ENCODE measurements at regions of chrX and their contacts with region 1.

Region 1: GRCh38 chrX:69222103-69223090 is 57.1 kb upstream of the PJA1 start:
- H3K4me3 ChIP-seq: no peak overlapping the region
- H3K27ac ChIP-seq: no peak overlapping the region
- H3K4me1 ChIP-seq: no peaks in the 10 kb centered on the region
- CTCF ChIP-seq: peak; percentile 73

Region 2: GRCh38 chrX:68822641-68823410 is 399.6 kb before region 1 on chrX:
- CTCF ChIA-PET with region 1: interaction called, 137 read pairs
- POLR2A ChIA-PET with region 1: interaction called, 34 read pairs
- H3K4me3 ChIP-seq: no peak overlapping the region
- H3K27ac ChIP-seq: no peak overlapping the region
- H3K4me1 ChIP-seq: no peaks in the 10 kb centered on the region
- CTCF ChIP-seq: peak; percentile 90

Region 3: DNA sequence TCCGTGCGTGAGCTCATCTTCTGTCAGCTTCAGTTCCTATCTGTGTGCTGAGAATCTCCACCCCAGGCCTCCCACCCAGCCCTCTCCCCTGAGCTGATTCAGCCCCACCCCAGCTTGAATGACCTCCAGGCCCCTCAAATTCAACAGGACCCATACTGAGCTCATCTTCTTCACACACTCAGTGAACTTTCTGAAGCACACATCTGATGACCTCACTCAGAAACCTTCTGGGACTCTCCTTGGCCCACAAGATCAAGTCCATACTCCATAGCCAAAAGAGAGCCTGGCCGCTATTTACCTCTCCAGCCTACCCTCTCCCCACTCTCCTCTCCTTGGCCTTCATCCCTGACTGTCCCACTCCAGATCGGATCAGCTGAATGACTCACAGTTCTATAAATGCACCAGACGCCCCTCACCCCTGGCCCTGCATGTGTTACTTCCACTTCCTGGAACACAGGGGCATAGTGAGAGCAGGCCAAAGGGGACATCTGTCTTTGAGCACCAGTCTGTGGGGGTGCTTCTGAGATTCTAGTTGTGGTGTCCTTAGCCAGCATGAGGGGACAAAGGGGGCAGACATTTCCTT is 119.7 kb before region 1 on chrX:
- CTCF ChIA-PET with region 1: interaction called, 12 read pairs
- POLR2A ChIA-PET with region 1: no interaction called
- H3K4me3 ChIP-seq: no peak overlapping the region
- H3K27ac ChIP-seq: no peak overlapping the region
- H3K4me1 ChIP-seq: peaks cover 5% of the 10 kb centered on the region; the same call in 1 of the 2 replicates
- CTCF ChIP-seq: no peak

Region 4: GRCh38 chrX:69197690-69198089 is 24.7 kb before region 1 on chrX:
- CTCF ChIA-PET with region 1: interaction called, 10 read pairs
- POLR2A ChIA-PET with region 1: no interaction called
- H3K4me3 ChIP-seq: no peak overlapping the region
- H3K27ac ChIP-seq: no peak overlapping the region
- H3K4me1 ChIP-seq: no peaks in the 10 kb centered on the region
- CTCF ChIP-seq: no peak

Region 5: GRCh38 chrX:69387567-69388487 is 165.4 kb after region 1 on chrX:
- CTCF ChIA-PET with region 1: interaction called, 13 read pairs
- POLR2A ChIA-PET with region 1: no interaction called
- H3K4me3 ChIP-seq: no peak overlapping the region
- H3K27ac ChIP-seq: no peak overlapping the region
- H3K4me1 ChIP-seq: no peaks in the 10 kb centered on the region
- CTCF ChIP-seq: peak; percentile 87

Region 6: DNA sequence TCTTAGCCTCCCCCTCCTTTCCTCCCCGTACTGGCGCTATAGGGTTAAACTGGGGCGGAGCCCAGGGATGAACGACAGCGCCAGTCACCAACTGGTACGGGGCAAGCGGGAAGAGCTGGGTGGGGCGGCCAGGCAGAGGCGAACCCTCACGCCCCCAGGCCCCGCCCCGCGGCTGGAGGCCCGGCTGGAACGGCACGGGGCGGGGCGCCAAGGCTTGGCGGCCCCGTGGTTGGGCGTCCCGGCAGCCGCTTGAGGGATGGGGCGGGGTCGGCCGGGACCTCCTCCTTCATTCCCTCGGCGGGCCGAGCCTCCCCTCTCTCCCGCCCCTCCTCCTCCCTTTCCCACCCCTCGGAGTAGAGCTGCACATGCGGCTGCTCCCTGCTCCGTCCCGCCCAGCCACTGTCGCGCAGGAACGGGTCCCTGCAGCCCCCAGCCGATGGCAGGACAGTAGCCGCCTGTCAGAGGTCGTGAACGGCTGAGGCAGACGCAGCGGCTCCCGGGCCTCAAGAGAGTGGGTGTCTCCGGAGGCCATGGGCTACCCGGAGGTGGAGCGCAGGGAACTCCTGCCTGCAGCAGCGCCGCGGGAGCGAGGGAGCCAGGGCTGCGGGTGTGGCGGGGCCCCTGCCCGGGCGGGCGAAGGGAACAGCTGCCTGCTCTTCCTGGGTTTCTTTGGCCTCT is 393.5 kb after region 1 on chrX and contains the start of gene EDA:
- CTCF ChIA-PET with region 1: no interaction called
- POLR2A ChIA-PET with region 1: no interaction called
- H3K4me3 ChIP-seq: peak within 1 kb of the TSS; percentile 52
- H3K27ac ChIP-seq: peak within 1 kb of the TSS; percentile 34; the same call in 1 of the 2 replicates
- H3K4me1 ChIP-seq: peaks cover 3% of the 10 kb centered on the region; the same call in 1 of the 2 replicates
- CTCF ChIP-seq: no peak

Region 7: DNA sequence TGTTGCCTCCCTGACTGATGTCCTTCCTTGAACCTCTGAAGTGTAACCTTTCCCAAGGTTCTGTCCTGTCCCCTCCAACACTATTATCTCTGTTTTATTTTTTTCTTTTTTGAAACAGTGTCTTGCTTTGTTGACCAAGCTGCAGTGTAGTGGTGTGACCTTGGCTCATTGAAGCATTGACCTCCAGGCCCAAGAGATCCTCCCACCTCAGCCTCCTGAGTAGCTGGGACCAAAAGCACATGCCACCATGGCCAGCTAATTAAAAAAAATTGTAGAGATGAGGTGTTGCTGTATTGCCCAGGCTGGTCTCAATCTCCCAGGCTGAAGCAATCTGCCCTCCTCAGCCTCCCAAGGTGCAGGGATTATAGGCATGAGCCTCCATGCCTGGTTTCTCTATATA is 452.5 kb after region 1 on chrX:
- CTCF ChIA-PET with region 1: no interaction called
- POLR2A ChIA-PET with region 1: no interaction called
- H3K4me3 ChIP-seq: no peak overlapping the region
- H3K27ac ChIP-seq: no peak overlapping the region
- H3K4me1 ChIP-seq: no peaks in the 10 kb centered on the region
- CTCF ChIP-seq: no peak